K562 (cell line): ENCODE measurements at regions of chr2 and their contacts with region 1.

Region 1: GRCh38 chr2:216666461-216667233 is 28.7 kb downstream of the IGFBP5 start:
- DNase-seq: peak; percentile 64 to 75 (median 66)
- ATAC-seq: peak; percentile 84
- H3K4me3 ChIP-seq: no peak overlapping the region
- H3K27ac ChIP-seq: no peak overlapping the region
- H3K4me1 ChIP-seq: peaks cover 9 to 10% of the 10 kb centered on the region in 2 experiments; a peak in 4 of 5 replicates
- H3K27me3 ChIP-seq: peaks cover 4 to 40% of the 10 kb centered on the region in 2 experiments; a peak in 4 of 5 replicates
- CTCF ChIP-seq: peak; percentile 84 to 90 (median 86)
- EP300 ChIP-seq: no peak
- POLR2A ChIP-seq: no peak
- RAD21 ChIP-seq: peak; percentile 88 to 93

Region 2: DNA sequence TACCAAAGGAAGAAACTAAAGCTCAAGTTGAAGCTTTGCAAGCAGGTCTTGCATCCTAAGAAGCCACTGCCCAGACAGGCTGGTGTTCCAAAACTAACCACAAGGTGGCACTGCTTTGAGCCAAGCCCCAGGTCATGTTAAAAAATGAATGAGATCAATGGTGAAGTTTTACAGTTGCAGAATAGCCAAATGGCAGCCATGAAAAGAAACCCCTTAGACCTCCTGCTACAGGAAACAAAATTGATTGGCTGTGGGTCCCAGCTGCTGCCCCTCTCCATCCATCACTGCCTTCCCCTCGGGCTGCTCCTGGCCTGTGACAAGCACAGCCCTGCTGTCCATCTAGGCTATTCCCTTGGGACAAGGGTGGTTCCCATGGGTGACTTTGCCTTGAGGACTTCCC is 632.6 kb before region 1 on chr2:
- CTCF ChIA-PET with region 1: interaction called, 4 read pairs
- POLR2A ChIA-PET with region 1: no interaction called
- in situ Hi-C with region 1: loop called (anchors 10 kb)
- intact Hi-C with region 1: no loop called
- DNase-seq: peak; percentile 57 to 69 (median 68)
- ATAC-seq: peak; percentile 85
- H3K4me3 ChIP-seq: no peak overlapping the region
- H3K27ac ChIP-seq: no peak overlapping the region
- H3K4me1 ChIP-seq: no peaks in the 10 kb centered on the region; a peak in 2 of 5 replicates
- H3K27me3 ChIP-seq: no peaks in the 10 kb centered on the region
- CTCF ChIP-seq: peak; percentile 57 to 77 (median 69)
- EP300 ChIP-seq: no peak
- POLR2A ChIP-seq: no peak
- RAD21 ChIP-seq: peak; percentile 36 to 53; a peak in 3 of 4 replicates

Region 3: DNA sequence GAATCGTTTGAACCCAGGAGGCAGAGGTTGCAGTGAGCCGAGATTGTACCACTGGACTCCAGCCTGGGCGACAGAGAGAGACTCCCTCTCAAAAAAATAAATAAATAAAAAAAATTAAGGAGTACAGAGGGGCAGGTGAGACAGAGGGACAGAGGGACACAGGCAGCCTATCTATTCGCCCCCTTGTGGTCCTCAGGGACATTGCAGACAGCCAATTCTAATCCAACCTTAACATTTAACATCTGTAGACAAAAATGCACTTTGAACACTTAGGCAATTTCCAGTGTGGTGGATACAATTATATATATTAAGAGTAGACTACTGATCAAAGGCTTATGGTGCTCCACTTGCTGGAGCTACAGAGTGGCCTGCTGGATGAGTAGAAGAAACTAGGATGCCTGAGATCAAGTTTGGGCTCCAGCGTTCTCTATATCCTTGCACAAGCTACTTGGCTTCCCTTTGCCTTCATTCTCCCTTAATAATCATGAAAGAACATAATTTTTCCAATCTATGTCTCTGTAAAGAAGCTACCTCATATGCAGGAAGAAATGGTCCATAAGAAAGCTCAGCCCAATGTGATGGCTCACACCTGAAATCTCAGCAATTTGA is 262.5 kb before region 1 on chr2:
- CTCF ChIA-PET with region 1: no interaction called
- POLR2A ChIA-PET with region 1: interaction called, 3 read pairs
- in situ Hi-C with region 1: no loop called
- intact Hi-C with region 1: loop called (anchors 2 kb)
- DNase-seq: peak; percentile 34 to 39 (median 36)
- ATAC-seq: peak; percentile 81
- H3K4me3 ChIP-seq: no peak overlapping the region
- H3K27ac ChIP-seq: no peak overlapping the region
- H3K4me1 ChIP-seq: no peaks in the 10 kb centered on the region; a peak in 1 of 5 replicates
- H3K27me3 ChIP-seq: peaks cover 2 to 10% of the 10 kb centered on the region in 2 experiments; a peak in 3 of 5 replicates
- CTCF ChIP-seq: peak; percentile 58 to 69 (median 66)
- EP300 ChIP-seq: no peak
- POLR2A ChIP-seq: no peak
- RAD21 ChIP-seq: peak; percentile 59 to 68

Region 4: GRCh38 chr2:216519154-216519762 is 147.4 kb before region 1 on chr2:
- CTCF ChIA-PET with region 1: interaction called, 21 read pairs
- POLR2A ChIA-PET with region 1: no interaction called
- in situ Hi-C with region 1: loop called (anchors 5 kb)
- intact Hi-C with region 1: loop called (anchors 1 kb)
- DNase-seq: peak; percentile 41 to 75 (median 51)
- ATAC-seq: peak; percentile 91
- H3K4me3 ChIP-seq: no peak overlapping the region
- H3K27ac ChIP-seq: no peak overlapping the region
- H3K4me1 ChIP-seq: no peaks in the 10 kb centered on the region; a peak in 1 of 5 replicates
- H3K27me3 ChIP-seq: no peaks in the 10 kb centered on the region
- CTCF ChIP-seq: peak; percentile 46 to 60 (median 59); a peak in 5 of 6 replicates
- EP300 ChIP-seq: no peak
- POLR2A ChIP-seq: no peak
- RAD21 ChIP-seq: peak; percentile 77 to 91

Region 5: DNA sequence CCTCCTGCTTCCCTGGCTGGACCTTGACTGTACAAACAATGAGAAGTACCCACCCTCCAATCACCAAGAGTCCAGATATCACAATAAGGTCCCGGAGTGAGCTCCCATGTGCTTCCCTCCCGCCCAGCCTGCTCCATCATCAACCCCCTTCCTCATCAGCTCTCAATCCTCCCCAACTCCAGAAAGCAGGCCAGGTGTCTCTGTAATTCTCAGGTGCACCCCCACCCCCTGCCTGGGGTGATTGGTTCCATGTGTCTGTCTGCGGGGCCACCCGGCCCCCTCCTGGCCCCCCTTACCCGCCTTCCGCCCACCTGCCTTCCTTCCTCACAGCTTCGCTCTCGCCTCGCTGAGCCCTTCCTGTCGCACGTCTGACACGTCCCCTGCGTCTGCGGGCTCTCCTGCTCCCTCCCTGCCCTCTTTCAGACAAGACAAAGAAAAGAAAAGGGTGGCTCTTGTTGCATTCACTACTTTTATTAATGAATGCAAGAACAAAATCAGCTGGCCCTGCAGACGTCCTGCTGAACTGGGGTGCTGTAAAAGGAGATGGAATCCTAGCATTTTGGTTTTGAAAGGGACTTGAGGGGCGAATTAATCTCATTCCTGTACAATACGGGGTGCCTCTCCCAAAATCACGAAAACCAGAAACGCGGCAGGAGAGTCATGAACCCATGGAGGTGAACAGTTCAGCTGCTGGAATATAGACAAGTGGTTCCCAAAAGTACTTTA is 59.9 kb before region 1 on chr2:
- CTCF ChIA-PET with region 1: no interaction called
- POLR2A ChIA-PET with region 1: no interaction called
- in situ Hi-C with region 1: no loop called
- intact Hi-C with region 1: no loop called
- DNase-seq: peak in 1 of 4 experiments; percentile 6
- ATAC-seq: no peak
- H3K4me3 ChIP-seq: peak overlapping the region; percentile 18; the same call in 1 of the 2 replicates
- H3K27ac ChIP-seq: no peak overlapping the region
- H3K4me1 ChIP-seq: peaks cover 0 to 3% of the 10 kb centered on the region in 2 experiments; a peak in 1 of 5 replicates
- H3K27me3 ChIP-seq: peaks cover 4 to 56% of the 10 kb centered on the region in 2 experiments; a peak in 3 of 5 replicates
- CTCF ChIP-seq: no peak
- EP300 ChIP-seq: no peak
- POLR2A ChIP-seq: no peak
- RAD21 ChIP-seq: no peak

Region 6: GRCh38 chr2:216617159-216617815 is 49.4 kb before region 1 on chr2:
- CTCF ChIA-PET with region 1: no interaction called
- POLR2A ChIA-PET with region 1: no interaction called
- in situ Hi-C with region 1: no loop called
- intact Hi-C with region 1: no loop called
- DNase-seq: no peak
- ATAC-seq: no peak
- H3K4me3 ChIP-seq: no peak overlapping the region
- H3K27ac ChIP-seq: no peak overlapping the region
- H3K4me1 ChIP-seq: peaks cover 4 to 6% of the 10 kb centered on the region in 2 experiments; a peak in 4 of 5 replicates
- H3K27me3 ChIP-seq: no peaks in the 10 kb centered on the region; a peak in 1 of 5 replicates
- CTCF ChIP-seq: no peak
- EP300 ChIP-seq: no peak
- POLR2A ChIP-seq: no peak
- RAD21 ChIP-seq: no peak

Region 7: DNA sequence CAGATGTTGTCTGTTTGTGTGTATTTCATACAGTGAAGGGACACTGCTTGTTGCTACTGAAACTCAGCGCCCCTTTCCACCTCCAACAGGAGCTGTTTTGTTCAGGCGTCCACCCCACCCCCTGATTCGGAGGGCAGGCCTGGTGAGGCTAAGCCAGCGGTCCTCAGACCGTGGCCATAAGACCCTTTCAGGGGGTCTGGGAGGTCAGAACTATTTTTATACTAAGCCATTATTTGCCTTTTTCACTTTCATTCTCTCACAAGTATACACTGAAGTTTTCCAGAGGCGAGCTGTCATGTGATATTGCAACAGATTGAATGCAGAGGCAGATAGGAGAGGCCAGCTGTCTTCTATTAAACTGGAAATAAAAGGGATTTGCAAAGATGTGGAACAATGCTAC is 68.4 kb after region 1 on chr2:
- CTCF ChIA-PET with region 1: no interaction called
- POLR2A ChIA-PET with region 1: no interaction called
- in situ Hi-C with region 1: no loop called
- intact Hi-C with region 1: no loop called
- DNase-seq: no peak
- ATAC-seq: no peak
- H3K4me3 ChIP-seq: no peak overlapping the region
- H3K27ac ChIP-seq: no peak overlapping the region
- H3K4me1 ChIP-seq: no peaks in the 10 kb centered on the region
- H3K27me3 ChIP-seq: peaks cover 0 to 26% of the 10 kb centered on the region in 2 experiments; a peak in 4 of 5 replicates
- CTCF ChIP-seq: no peak
- EP300 ChIP-seq: no peak
- POLR2A ChIP-seq: no peak
- RAD21 ChIP-seq: no peak